ENCODE measurements at regions of chrX and their contacts with region 1.

Region 1: DNA sequence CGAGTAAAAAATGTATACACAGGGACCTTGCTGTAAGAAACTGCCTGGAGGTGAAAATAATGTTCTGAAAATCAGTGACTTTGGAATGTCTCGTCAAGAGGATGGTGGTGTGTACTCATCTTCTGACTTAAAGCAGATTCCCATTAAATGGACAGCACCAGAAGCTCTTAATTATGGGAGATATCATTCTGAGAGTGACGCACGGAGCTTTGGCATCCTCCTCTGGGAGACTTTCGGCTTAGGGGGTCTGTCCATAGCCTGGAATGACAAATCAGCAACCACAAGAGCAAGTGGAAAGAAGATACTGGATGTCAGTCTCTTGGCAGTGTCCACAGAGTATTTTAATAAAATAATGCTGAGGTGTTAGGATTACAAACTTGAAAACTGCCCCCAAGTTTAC is 129.4 kb downstream of the THOC2 start:
- DNase-seq: no peak
- ATAC-seq: no peak
- H3K4me3 ChIP-seq: no peak overlapping the region
- H3K27ac ChIP-seq: no peak overlapping the region
- H3K4me1 ChIP-seq: no peaks in the 10 kb centered on the region
- H3K27me3 ChIP-seq: no peaks in the 10 kb centered on the region
- CTCF ChIP-seq: no peak

Region 2: DNA sequence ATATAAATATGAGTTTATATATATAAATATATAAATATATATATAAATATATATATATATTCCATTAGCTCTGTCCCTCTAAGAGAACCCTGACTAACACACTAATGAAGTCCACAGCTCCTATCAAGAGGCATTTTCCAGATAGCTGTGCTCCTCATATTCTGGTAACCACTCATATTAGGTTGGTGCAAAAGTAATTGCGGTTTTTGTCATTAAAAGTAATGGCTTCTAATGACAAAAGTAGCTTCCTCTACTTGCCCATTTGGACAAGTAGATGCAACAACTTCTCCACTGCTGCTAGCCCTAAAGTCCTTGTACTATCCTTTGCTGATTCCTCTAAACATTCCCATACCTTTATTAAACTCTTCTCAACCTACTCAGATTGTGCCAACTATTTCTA is 52.7 kb before region 1 on chrX:
- CTCF ChIA-PET with region 1: no interaction called
- POLR2A ChIA-PET with region 1: interaction called, 19 read pairs
- in situ Hi-C with region 1: no loop called
- intact Hi-C with region 1: no loop called
- DNase-seq: no peak
- ATAC-seq: no peak
- H3K4me3 ChIP-seq: no peak overlapping the region
- H3K27ac ChIP-seq: no peak overlapping the region
- H3K4me1 ChIP-seq: no peaks in the 10 kb centered on the region
- H3K27me3 ChIP-seq: no peaks in the 10 kb centered on the region
- CTCF ChIP-seq: no peak

Region 3: DNA sequence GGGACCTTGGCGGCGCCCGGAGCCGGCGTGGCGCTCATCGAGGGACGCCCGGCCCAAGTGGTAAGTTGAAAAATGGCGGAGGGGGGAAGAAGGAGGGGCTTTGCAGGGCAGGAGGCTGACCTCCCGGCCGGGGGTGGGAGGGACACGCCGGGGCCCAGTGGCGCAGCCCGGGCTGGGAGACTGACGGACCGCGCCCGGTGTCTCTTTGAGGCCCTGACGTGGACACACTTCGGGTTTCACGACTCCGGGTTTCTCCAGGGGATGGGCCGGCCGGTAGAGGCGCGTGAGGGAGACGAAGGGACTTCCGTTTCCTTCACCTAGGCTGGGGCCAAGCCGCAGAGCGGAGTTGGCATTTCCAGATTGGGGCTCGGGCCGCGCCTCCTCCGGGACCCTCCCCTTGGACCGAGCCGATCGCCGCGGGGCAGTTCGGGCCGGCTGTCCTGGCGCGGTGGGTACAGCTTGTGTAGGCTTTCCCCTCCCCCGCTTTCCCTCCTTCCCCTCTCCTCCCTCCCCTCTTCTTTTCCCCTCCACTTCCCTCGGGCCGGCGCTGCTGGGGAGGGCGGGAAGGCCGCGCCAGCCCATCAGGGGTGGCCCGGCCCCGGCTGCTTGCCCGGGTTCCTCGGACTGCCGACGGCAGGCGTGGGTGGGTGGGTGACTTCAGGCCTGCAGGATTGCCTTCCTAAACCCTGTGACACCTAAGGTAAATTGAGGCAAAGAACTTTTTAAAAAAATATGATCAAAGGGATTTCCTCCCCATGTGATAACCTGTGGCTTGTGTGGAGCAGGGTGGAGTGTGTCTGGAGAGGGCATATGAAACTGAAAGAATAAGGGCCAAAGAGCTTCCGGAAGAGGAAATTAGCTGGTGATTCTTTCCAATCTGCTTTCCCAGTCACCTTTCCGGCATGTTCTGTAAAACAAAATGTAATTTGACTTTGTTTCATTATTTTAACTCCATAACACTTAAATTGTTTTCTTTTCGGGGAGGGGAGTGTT is 256.7 kb after region 1 on chrX and contains the start of gene XIAP:
- CTCF ChIA-PET with region 1: interaction called, 15 read pairs
- POLR2A ChIA-PET with region 1: no interaction called
- in situ Hi-C with region 1: no loop called
- intact Hi-C with region 1: no loop called
- DNase-seq: peak; percentile 59
- ATAC-seq: peak; percentile 97
- H3K4me3 ChIP-seq: peak within 1 kb of the TSS; percentile 88 to 92
- H3K27ac ChIP-seq: peak within 1 kb of the TSS; percentile 100
- H3K4me1 ChIP-seq: peaks cover 7% of the 10 kb centered on the region
- H3K27me3 ChIP-seq: no peaks in the 10 kb centered on the region
- CTCF ChIP-seq: no peak
- total RNA-seq, gene XIAP: 73.7 TPM